Panc1 (cell line): ENCODE measurements at regions of chr19 and their contacts with region 1.

Region 1: GRCh38 chr19:39341719-39342604 is at the start of gene SAMD4B:
- DNase-seq: peak; percentile 100
- ATAC-seq: peak; percentile 94
- H3K4me3 ChIP-seq: peak within 1 kb of the TSS; percentile 39 to 60
- H3K27ac ChIP-seq: peak within 1 kb of the TSS; percentile 88
- H3K4me1 ChIP-seq: peaks cover 40% of the 10 kb centered on the region
- H3K27me3 ChIP-seq: no peaks in the 10 kb centered on the region
- CTCF ChIP-seq: no peak
- total RNA-seq, gene SAMD4B: 1,339 TPM

Region 2: GRCh38 chr19:39057615-39058014 is 284.3 kb before region 1 on chr19:
- CTCF ChIA-PET with region 1: no interaction called
- POLR2A ChIA-PET with region 1: no interaction called
- in situ Hi-C with region 1: no loop called
- intact Hi-C with region 1: no loop called
- DNase-seq: no peak
- ATAC-seq: no peak
- H3K4me3 ChIP-seq: no peak overlapping the region
- H3K27ac ChIP-seq: 0 out of 2 replicates have a peak overlapping the region, but pooled peaks have one; percentile 0
- H3K4me1 ChIP-seq: no peaks in the 10 kb centered on the region
- H3K27me3 ChIP-seq: no peaks in the 10 kb centered on the region
- CTCF ChIP-seq: no peak

Region 3: DNA sequence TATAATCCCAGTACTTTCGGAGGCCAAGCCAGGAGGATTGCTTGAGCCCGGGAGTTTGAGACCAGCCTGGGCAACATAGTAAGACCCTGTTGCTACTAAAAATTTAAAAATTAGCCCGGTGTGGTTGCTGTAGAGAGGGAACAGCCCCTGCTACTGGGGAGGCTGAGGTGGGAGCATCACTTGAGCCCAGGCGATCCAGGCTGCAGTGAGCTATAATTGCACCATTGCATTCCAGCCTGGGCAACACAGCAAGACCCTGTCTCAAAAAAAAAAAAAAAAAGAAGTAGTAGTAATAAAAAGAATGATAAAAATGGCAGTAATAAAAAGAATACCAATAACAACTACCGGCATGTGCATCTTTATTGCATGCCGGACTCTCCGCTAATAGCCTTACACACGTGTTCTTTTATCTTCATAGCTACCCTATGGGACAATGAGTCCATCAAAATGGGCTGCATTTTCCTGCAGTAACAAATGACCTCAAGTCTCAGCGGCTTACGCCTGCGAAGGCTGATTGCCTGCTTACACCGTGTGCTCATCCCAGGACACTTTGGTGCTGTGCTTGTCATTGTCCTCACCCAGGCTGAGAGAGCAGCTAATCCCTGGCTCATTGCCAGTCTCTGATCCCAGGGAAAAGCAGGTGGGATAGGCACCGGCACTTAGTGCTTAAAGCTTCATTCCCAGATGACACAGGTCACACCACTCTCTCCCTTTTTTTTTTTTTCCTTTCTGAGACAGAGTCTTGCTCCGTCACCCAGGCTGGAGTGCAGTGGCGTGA is 123.5 kb before region 1 on chr19:
- CTCF ChIA-PET with region 1: interaction called, 5 read pairs
- POLR2A ChIA-PET with region 1: interaction called, 3 read pairs
- in situ Hi-C with region 1: loop called (anchors 5 kb)
- intact Hi-C with region 1: no loop called
- DNase-seq: no peak
- ATAC-seq: 0 out of 2 replicates have a peak, but pooled peaks have one; percentile 8
- H3K4me3 ChIP-seq: no peak overlapping the region
- H3K27ac ChIP-seq: no peak overlapping the region
- H3K4me1 ChIP-seq: no peaks in the 10 kb centered on the region
- H3K27me3 ChIP-seq: peaks cover 10% of the 10 kb centered on the region
- CTCF ChIP-seq: no peak

Region 4: GRCh38 chr19:39319892-39320248 is 22.1 kb before region 1 on chr19:
- CTCF ChIA-PET with region 1: interaction called, 58 read pairs
- POLR2A ChIA-PET with region 1: interaction called, 18 read pairs
- in situ Hi-C with region 1: no loop called
- intact Hi-C with region 1: no loop called
- DNase-seq: no peak
- ATAC-seq: no peak
- H3K4me3 ChIP-seq: peak overlapping the region; percentile 34 to 56
- H3K27ac ChIP-seq: no peak overlapping the region; the same call in 1 of the 2 replicates
- H3K4me1 ChIP-seq: peaks cover 4% of the 10 kb centered on the region
- H3K27me3 ChIP-seq: peaks cover 6% of the 10 kb centered on the region
- CTCF ChIP-seq: no peak

Region 5: GRCh38 chr19:39372047-39372802 is 30.3 kb after region 1 on chr19:
- CTCF ChIA-PET with region 1: interaction called, 25 read pairs
- POLR2A ChIA-PET with region 1: interaction called, 10 read pairs
- in situ Hi-C with region 1: no loop called
- intact Hi-C with region 1: no loop called
- DNase-seq: no peak
- ATAC-seq: peak; percentile 2
- H3K4me3 ChIP-seq: no peak overlapping the region
- H3K27ac ChIP-seq: no peak overlapping the region
- H3K4me1 ChIP-seq: no peaks in the 10 kb centered on the region
- H3K27me3 ChIP-seq: no peaks in the 10 kb centered on the region
- CTCF ChIP-seq: no peak

Region 6: GRCh38 chr19:39397360-39398296 is 55.7 kb after region 1 on chr19:
- CTCF ChIA-PET with region 1: interaction called, 10 read pairs
- POLR2A ChIA-PET with region 1: no interaction called
- in situ Hi-C with region 1: no loop called
- intact Hi-C with region 1: no loop called
- DNase-seq: peak; percentile 100
- ATAC-seq: peak; percentile 78
- H3K4me3 ChIP-seq: no peak overlapping the region
- H3K27ac ChIP-seq: peak overlapping the region; percentile 75
- H3K4me1 ChIP-seq: peaks cover 51% of the 10 kb centered on the region
- H3K27me3 ChIP-seq: no peaks in the 10 kb centered on the region
- CTCF ChIP-seq: no peak

Region 7: GRCh38 chr19:39557441-39558151 is 215.6 kb after region 1 on chr19:
- CTCF ChIA-PET with region 1: no interaction called
- POLR2A ChIA-PET with region 1: interaction called, 13 read pairs
- in situ Hi-C with region 1: no loop called
- intact Hi-C with region 1: no loop called
- DNase-seq: peak; percentile 91
- ATAC-seq: peak; percentile 82
- H3K4me3 ChIP-seq: peak overlapping the region; percentile 0 to 36; a peak in 3 of 4 replicates
- H3K27ac ChIP-seq: peak overlapping the region; percentile 0; the same call in 1 of the 2 replicates
- H3K4me1 ChIP-seq: peaks cover 17% of the 10 kb centered on the region
- H3K27me3 ChIP-seq: peaks cover 43% of the 10 kb centered on the region
- CTCF ChIP-seq: no peak